IMR-90 (cell line): ENCODE measurements at regions of chr6 and their contacts with region 1.

Region 1: GRCh38 chr6:103198386-103198785 is 1661.3 kb downstream of the HACE1 start:
- DNase-seq: no peak
- ATAC-seq: no peak
- H3K4me3 ChIP-seq: no peak overlapping the region
- H3K27ac ChIP-seq: no peak overlapping the region
- H3K4me1 ChIP-seq: no peaks in the 10 kb centered on the region
- H3K27me3 ChIP-seq: no peaks in the 10 kb centered on the region
- CTCF ChIP-seq: no peak
- POLR2A ChIP-seq: no peak
- RAD21 ChIP-seq: no peak

Region 2: DNA sequence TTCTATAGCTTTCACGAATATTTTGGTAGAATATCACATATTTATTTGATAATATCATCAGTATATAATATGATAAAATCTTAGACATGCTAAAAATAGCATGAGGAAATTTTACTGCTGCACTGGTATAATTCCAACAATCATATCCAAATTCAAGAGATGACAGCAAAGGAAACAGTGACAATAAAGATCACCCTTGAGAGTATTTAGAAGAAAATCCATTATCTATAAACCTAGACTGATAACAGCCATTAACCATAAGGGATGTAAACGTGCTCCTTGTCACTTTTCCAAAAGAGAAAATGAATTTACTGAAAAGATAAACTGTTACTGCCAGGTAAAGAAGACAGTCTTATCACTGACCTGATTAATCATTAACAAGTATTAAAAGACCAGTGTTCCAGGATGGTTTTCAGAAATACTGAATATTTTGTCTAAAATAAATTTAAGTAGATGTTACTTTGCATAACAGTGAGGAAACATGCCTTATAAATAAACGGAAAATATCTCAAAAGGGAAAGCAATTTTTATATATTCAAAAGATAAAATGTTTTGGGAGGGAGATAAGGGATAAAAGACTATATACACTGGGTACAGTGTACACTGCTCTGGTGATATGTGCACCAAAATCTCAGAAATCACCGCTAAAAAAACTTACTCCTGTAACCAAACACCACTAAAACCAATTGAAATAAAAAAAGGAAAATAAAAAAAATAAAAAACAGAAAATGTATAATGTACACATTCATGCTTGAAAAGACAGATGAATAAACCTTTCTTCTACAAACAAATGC is 43.4 kb before region 1 on chr6:
- CTCF ChIA-PET with region 1: no interaction called
- POLR2A ChIA-PET with region 1: no interaction called
- dilution Hi-C with region 1: no loop called
- in situ Hi-C with region 1: no loop called
- intact Hi-C with region 1: loop called (anchors 1 kb)
- DNase-seq: no peak
- ATAC-seq: no peak
- H3K4me3 ChIP-seq: no peak overlapping the region
- H3K27ac ChIP-seq: no peak overlapping the region
- H3K4me1 ChIP-seq: no peaks in the 10 kb centered on the region
- H3K27me3 ChIP-seq: no peaks in the 10 kb centered on the region
- CTCF ChIP-seq: no peak
- POLR2A ChIP-seq: no peak
- RAD21 ChIP-seq: no peak